Activated naive CD4-positive, alpha-beta T cell treated with anti-CD3 and anti-CD28 coated beads for 36 hours (primary cell): ENCODE measurements at regions of chr7 and their contacts with region 1.

Region 1: GRCh38 chr7:137898839-137899721 is 52.3 kb upstream of the DGKI start:
- DNase-seq: peak; percentile 86
- H3K4me3 Mint-ChIP-seq: no peak overlapping the region
- H3K27ac Mint-ChIP-seq: no peak overlapping the region
- H3K4me1 Mint-ChIP-seq: peaks cover 23% of the 10 kb centered on the region
- H3K27me3 Mint-ChIP-seq: no peaks in the 10 kb centered on the region

Region 2: DNA sequence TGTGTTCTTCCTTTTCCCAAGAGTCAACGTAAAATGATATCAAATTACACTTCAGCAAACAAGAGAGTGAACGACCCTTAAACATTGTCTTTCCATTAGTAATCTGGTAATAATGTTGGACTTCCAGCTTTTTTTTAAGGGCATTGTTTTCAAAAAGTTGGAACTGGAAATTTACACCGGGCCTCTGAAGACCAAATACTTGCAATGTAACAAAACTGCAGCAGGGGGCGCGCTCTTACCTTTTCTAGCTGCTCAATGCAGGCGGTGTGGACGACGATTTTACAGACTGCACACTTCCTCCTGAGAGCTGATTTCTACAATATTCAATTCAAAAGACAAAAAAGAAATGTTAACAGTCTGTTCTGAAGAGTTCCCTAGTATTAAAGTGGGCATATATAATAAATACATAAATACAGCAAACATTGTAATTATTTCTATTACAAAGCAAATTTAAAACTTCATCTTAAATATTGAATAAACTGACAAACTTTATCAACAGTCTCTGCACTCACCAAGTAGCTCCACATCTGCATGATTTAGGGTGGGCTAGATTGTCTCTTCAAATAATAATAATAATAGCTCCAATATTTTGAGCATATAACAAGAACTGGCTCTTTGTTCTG is 242.7 kb before region 1 on chr7:
- CTCF ChIA-PET with region 1: interaction called, 35 read pairs
- intact Hi-C with region 1: loop called (anchors 1 kb)
- DNase-seq: peak; percentile 84
- H3K4me3 Mint-ChIP-seq: no peak overlapping the region
- H3K27ac Mint-ChIP-seq: no peak overlapping the region
- H3K4me1 Mint-ChIP-seq: no peaks in the 10 kb centered on the region
- H3K27me3 Mint-ChIP-seq: peaks cover 4% of the 10 kb centered on the region

Region 3: DNA sequence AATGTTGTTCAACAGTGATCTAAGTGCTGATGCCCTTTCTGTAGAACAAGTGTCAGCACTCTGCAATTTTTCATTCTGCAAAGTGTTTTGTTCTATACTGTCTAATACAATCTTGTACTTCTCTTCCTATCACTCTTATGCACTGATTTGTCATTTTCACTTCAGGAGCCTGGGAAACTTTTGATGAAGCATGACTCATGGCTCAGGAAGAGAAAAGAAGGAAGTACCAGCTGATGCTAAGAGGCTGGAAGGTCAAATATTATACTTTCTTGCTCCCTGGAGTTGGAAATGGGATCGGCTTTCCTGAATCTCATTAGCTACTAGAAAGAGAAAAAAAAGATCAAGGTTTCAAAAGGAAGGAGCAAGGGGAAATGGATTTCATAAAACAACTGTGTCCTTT is 98.1 kb before region 1 on chr7:
- CTCF ChIA-PET with region 1: no interaction called
- intact Hi-C with region 1: no loop called
- DNase-seq: no peak
- H3K4me3 Mint-ChIP-seq: no peak overlapping the region
- H3K27ac Mint-ChIP-seq: no peak overlapping the region
- H3K4me1 Mint-ChIP-seq: no peaks in the 10 kb centered on the region
- H3K27me3 Mint-ChIP-seq: peaks cover 12% of the 10 kb centered on the region

Region 4: GRCh38 chr7:137873989-137874777 is 24.9 kb before region 1 on chr7:
- CTCF ChIA-PET with region 1: interaction called, 4 read pairs
- intact Hi-C with region 1: loop called (anchors 2 kb)
- DNase-seq: no peak
- H3K4me3 Mint-ChIP-seq: no peak overlapping the region
- H3K27ac Mint-ChIP-seq: no peak overlapping the region
- H3K4me1 Mint-ChIP-seq: peaks cover 10% of the 10 kb centered on the region
- H3K27me3 Mint-ChIP-seq: no peaks in the 10 kb centered on the region

Region 5: GRCh38 chr7:138002096-138002827 is 103.2 kb after region 1 on chr7:
- CTCF ChIA-PET with region 1: interaction called, 283 read pairs
- intact Hi-C with region 1: no loop called
- DNase-seq: peak; percentile 98
- H3K4me3 Mint-ChIP-seq: peak overlapping the region; percentile 91
- H3K27ac Mint-ChIP-seq: peak overlapping the region; percentile 76
- H3K4me1 Mint-ChIP-seq: peaks cover 25% of the 10 kb centered on the region
- H3K27me3 Mint-ChIP-seq: no peaks in the 10 kb centered on the region

Region 6: GRCh38 chr7:138105216-138105615 is 206.1 kb after region 1 on chr7:
- CTCF ChIA-PET with region 1: no interaction called
- intact Hi-C with region 1: no loop called
- DNase-seq: no peak
- H3K4me3 Mint-ChIP-seq: no peak overlapping the region
- H3K27ac Mint-ChIP-seq: no peak overlapping the region
- H3K4me1 Mint-ChIP-seq: no peaks in the 10 kb centered on the region
- H3K27me3 Mint-ChIP-seq: peaks cover 9% of the 10 kb centered on the region

Region 7: DNA sequence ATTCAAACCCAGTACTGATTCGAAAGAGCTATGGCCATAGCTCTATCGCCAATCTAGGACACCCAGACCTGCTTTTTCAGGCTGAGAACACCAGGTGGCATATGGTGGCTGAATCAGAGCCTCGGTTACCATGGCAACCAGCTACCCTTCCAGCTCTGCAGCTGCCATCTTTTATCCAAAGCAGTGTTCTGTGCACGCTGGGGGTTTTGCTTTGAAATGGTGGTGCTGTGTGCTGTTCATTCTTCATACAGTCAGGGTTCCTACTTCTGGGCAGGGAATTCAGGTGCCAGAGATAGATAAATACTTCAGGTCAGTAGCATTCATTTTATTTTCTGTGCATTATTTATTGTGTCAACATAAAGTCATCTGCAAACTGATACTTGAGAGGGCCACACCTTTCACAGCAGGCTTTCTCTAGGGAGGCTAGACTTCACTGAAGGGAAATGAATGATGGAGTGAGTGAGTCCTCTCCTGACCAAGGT is 262.6 kb after region 1 on chr7:
- CTCF ChIA-PET with region 1: interaction called, 3 read pairs
- intact Hi-C with region 1: loop called (anchors 1 kb)
- DNase-seq: peak; percentile 88
- H3K4me3 Mint-ChIP-seq: no peak overlapping the region
- H3K27ac Mint-ChIP-seq: no peak overlapping the region
- H3K4me1 Mint-ChIP-seq: no peaks in the 10 kb centered on the region
- H3K27me3 Mint-ChIP-seq: no peaks in the 10 kb centered on the region